ENCODE measurements at regions of chr16 and their contacts with region 1.

Region 1: GRCh38 chr16:50542703-50543102 is 5.5 kb upstream of the NKD1 start:
- DNase-seq: no peak
- ATAC-seq: no peak
- H3K4me3 ChIP-seq: no peak overlapping the region
- H3K4me3 Mint-ChIP-seq: no peak overlapping the region
- H3K27ac ChIP-seq: no peak overlapping the region
- H3K27ac Mint-ChIP-seq: peak overlapping the region in 1 of 9 donors; percentile 22
- H3K4me1 ChIP-seq: peaks cover 9% of the 10 kb centered on the region in 2 donors
- H3K4me1 Mint-ChIP-seq: peaks cover 4 to 33% (median 14%) of the 10 kb centered on the region in 7 donors
- H3K27me3 ChIP-seq: no peaks in the 10 kb centered on the region
- H3K27me3 Mint-ChIP-seq: peaks cover 0 to 53% (median 0%) of the 10 kb centered on the region in 5 donors

Region 2: GRCh38 chr16:50530277-50531236 is 12.1 kb before region 1 on chr16:
- CTCF ChIA-PET with region 1: interaction called, 3 read pairs
- POLR2A ChIA-PET with region 1: no interaction called
- intact Hi-C with region 1: loop called in 1 of 2 experiments (anchors 1 kb)
- DNase-seq: no peak
- ATAC-seq: no peak
- H3K4me3 ChIP-seq: no peak overlapping the region
- H3K4me3 Mint-ChIP-seq: no peak overlapping the region
- H3K27ac ChIP-seq: no peak overlapping the region
- H3K27ac Mint-ChIP-seq: no peak overlapping the region
- H3K4me1 ChIP-seq: no peaks in the 10 kb centered on the region
- H3K4me1 Mint-ChIP-seq: peaks cover 0 to 3% (median 0%) of the 10 kb centered on the region in 7 donors
- H3K27me3 ChIP-seq: no peaks in the 10 kb centered on the region
- H3K27me3 Mint-ChIP-seq: peaks cover 0 to 18% (median 0%) of the 10 kb centered on the region in 5 donors

Measured in naive thymus-derived CD4-positive, alpha-beta T cell (primary cell).